ENCODE measurements at regions of chr5 and their contacts with region 1.

Region 1: DNA sequence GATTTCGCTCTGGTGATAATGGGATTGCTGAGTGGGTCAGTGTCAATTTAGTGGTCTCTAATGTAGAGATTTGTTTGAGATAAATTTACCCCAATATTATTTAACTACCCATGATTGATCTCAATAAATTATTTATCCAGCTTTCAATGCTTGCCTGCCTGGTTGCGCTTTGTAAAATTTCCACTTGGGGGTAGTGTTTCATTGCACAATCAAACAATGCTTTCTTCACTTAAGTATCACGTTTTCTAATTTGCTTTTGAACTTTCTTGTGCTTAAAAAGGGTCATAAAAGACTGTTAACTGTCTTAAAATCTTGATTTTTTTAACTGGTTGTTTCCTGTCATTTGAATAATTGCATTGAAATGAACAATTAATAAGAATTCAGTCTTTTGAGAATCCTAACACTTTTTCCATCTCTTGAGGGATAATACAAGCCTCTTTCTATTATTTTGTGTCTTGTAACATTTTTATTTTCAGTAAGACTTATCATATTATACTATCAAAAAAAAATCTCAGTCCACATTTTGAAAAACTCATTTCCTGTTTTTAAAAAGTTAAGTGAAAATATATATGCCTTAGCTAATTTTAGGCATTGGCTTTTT is 18.7 kb downstream of the HSD17B4 start:
- DNase-seq: peak; percentile 26
- ATAC-seq: no peak
- H3K4me3 ChIP-seq: no peak overlapping the region
- H3K27ac ChIP-seq: no peak overlapping the region
- H3K4me1 ChIP-seq: no peaks in the 10 kb centered on the region
- H3K27me3 ChIP-seq: no peaks in the 10 kb centered on the region
- CTCF ChIP-seq: peak; percentile 39 to 73 (median 65); a peak in 5 of 6 replicates
- POLR2A ChIP-seq: no peak
- RAD21 ChIP-seq: peak; percentile 78

Region 2: DNA sequence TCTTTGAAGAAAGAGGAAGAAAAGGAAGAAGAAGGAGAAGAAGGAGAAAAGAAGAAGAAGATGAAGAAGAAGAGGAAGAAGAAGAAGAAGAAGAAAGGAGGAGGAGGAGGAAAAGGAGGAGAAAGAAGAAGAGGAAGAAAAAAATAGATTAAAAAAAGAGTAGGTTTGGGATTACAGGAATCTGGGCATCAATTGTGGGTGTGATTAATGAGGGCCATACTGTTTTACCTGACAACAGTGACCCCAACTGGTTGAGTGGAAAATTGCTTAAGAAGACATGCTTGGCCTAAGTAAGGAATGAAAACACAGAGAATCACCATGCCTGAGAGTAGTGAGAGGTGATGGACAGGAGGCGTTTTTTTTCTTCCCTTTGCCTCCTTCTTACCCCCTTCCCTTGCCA is 273.0 kb after region 1 on chr5:
- CTCF ChIA-PET with region 1: no interaction called
- POLR2A ChIA-PET with region 1: no interaction called
- RAD21 ChIA-PET with region 1: no interaction called
- intact Hi-C with region 1: loop called (anchors 1 kb)
- DNase-seq: peak; percentile 59
- ATAC-seq: peak; percentile 86
- H3K4me3 ChIP-seq: no peak overlapping the region
- H3K27ac ChIP-seq: no peak overlapping the region
- H3K4me1 ChIP-seq: no peaks in the 10 kb centered on the region
- H3K27me3 ChIP-seq: no peaks in the 10 kb centered on the region
- CTCF ChIP-seq: peak; percentile 34 to 72 (median 54); a peak in 4 of 6 replicates
- POLR2A ChIP-seq: no peak
- RAD21 ChIP-seq: peak; percentile 67

Region 3: DNA sequence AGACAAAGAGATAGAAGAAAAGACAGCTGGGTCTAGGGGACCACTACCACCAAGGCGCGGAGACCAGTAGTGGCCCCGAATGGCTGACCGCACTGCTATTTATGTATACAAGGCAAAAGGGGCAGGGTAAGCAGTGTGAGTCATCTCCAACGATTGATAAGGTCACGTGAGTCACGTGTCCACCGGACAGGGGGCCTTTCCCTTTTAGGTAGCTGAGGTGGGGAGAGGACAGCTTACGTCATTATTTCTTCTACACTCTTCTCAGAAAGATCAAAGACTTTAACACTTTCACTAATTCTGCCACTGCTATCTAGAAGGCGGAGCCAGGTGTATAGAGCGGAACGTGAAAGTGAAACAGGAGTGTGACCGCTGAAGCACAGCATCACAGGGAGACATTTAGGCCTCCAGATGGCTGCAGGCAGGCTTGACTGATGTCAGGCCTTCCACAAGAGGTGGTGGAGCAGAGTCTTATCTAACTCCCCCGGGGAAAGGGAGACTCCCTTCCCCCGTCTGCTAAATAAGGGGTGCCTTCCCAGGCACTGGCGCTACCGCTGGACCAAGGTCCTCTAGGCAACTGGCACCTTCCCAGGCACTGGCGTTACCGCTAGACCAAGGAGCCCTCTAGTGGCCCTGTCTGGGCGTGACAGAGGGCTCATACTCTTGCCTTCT is 987.0 kb after region 1 on chr5:
- CTCF ChIA-PET with region 1: no interaction called
- POLR2A ChIA-PET with region 1: no interaction called
- RAD21 ChIA-PET with region 1: no interaction called
- intact Hi-C with region 1: loop called (anchors 2 kb)
- DNase-seq: peak; percentile 59
- ATAC-seq: peak; percentile 96
- H3K4me3 ChIP-seq: peak overlapping the region; percentile 48 to 63
- H3K27ac ChIP-seq: no peak overlapping the region
- H3K4me1 ChIP-seq: 0 out of 4 replicates have a peak, but pooled peaks cover 0 to 4% of the 10 kb centered on the region in 2 experiments
- H3K27me3 ChIP-seq: no peaks in the 10 kb centered on the region
- CTCF ChIP-seq: peak; percentile 52 to 72 (median 66); a peak in 5 of 6 replicates
- POLR2A ChIP-seq: no peak
- RAD21 ChIP-seq: peak; percentile 84

Region 4: DNA sequence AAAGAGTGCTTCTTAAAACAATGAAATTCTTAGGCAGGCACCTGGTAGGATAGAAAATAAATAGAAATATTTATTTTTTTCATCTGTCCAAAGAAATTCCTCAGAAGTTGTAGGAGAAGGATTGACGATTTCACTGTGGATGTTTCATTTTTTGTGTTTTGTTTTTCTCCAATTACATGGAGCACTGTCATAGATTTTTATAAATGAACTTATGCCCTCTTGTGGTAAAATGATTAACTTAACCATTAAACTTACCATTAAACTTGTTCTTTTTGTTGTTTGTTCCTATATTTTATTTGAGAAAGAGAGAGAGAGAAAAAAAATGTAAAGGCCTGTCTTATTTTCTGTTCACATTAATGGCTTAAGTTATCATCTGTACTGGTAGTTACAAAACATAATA is 1332.3 kb after region 1 on chr5:
- CTCF ChIA-PET with region 1: no interaction called
- POLR2A ChIA-PET with region 1: no interaction called
- RAD21 ChIA-PET with region 1: no interaction called
- intact Hi-C with region 1: loop called (anchors 5 kb)
- DNase-seq: peak; percentile 8
- ATAC-seq: 0 out of 2 replicates have a peak, but pooled peaks have one; percentile 42
- H3K4me3 ChIP-seq: no peak overlapping the region
- H3K27ac ChIP-seq: no peak overlapping the region
- H3K4me1 ChIP-seq: no peaks in the 10 kb centered on the region
- H3K27me3 ChIP-seq: no peaks in the 10 kb centered on the region
- CTCF ChIP-seq: peak in 2 of 3 experiments; percentile 38 to 54; a peak in 3 of 6 replicates
- POLR2A ChIP-seq: no peak
- RAD21 ChIP-seq: peak; percentile 49